SK-N-SH (cell line): ENCODE measurements at regions of chrX and their contacts with region 1.

Region 1: GRCh38 chrX:129833152-129833990 is 10.3 kb downstream of the ZDHHC9 start:
- DNase-seq: no peak
- H3K4me3 ChIP-seq: no peak overlapping the region
- H3K27ac ChIP-seq: peak overlapping the region in 1 of 2 experiments; percentile 36; a peak in 2 of 4 replicates
- H3K4me1 ChIP-seq: no peaks in the 10 kb centered on the region; a peak in 1 of 4 replicates
- H3K27me3 ChIP-seq: no peaks in the 10 kb centered on the region; the same call in 1 of the 2 replicates
- CTCF ChIP-seq: no peak
- EP300 ChIP-seq: no peak
- RAD21 ChIP-seq: no peak

Region 2: DNA sequence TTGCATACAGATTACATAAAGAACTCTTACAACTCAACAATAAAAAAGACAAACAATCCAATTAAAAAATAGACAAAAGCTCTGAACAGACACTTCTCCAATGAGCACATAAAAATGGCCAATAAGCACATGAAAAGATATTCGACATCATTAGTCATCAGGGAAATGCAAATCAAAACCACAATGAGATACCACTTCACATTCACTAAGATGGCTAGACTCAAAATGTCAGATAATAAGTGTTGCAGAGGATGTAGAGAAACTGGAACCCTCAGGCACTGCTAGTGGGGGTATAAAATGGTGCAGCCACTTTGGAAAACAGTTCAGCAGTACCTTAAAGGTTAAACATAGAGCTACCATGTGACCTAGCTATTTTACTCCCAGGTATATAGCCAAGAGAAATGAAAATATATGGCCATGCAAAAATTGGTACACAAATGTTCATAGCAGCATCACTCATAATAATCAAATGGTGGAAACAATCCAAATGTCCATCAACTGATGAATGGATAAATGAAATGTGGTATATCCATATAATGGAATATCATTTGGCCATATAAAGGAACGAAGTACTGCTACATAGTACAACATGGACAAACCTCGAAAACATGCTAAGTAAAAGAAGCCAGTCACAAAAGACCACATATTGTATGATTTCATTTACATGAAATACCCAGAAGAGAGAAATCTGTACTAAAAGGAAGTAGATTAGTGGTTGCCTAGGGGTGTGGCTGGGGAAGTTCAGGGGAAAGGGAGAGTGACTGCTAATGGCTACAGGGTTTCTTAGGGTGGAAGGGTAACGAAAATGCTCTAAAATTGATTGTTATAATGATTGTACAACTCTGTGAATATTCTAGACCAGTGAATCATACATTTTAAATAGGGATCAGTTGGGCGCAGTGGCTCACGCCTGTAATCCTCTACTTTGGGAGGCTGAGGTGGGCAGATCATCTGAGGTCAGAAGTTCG is 24.3 kb before region 1 on chrX:
- CTCF ChIA-PET with region 1: no interaction called
- POLR2A ChIA-PET with region 1: no interaction called
- DNase-seq: no peak
- H3K4me3 ChIP-seq: no peak overlapping the region
- H3K27ac ChIP-seq: no peak overlapping the region
- H3K4me1 ChIP-seq: no peaks in the 10 kb centered on the region
- H3K27me3 ChIP-seq: peaks cover 3% of the 10 kb centered on the region; the same call in 1 of the 2 replicates
- CTCF ChIP-seq: no peak
- EP300 ChIP-seq: no peak
- RAD21 ChIP-seq: no peak

Region 3: DNA sequence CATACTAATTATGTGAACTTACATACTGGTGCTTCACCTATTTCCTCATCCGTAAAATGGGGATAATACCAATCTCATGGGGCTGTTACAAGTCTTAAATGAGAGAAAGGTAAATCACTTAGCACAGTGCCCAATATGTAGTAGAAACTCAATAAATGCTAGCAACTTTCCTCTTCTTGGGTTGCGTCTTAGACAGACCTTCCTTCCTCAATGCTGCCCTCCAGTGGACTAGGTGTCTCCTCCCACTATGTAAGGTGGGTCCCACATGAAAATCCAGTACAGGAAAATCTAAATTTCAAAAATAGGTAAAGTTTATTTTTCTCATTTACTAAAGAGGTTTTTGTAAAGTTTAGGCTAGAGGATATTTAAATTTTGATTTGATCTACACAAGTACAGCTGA is 10.3 kb before region 1 on chrX:
- CTCF ChIA-PET with region 1: interaction called, 11 read pairs
- POLR2A ChIA-PET with region 1: no interaction called
- DNase-seq: peak; percentile 52
- H3K4me3 ChIP-seq: no peak overlapping the region
- H3K27ac ChIP-seq: no peak overlapping the region
- H3K4me1 ChIP-seq: no peaks in the 10 kb centered on the region
- H3K27me3 ChIP-seq: no peaks in the 10 kb centered on the region
- CTCF ChIP-seq: peak; percentile 67
- EP300 ChIP-seq: no peak
- RAD21 ChIP-seq: peak; percentile 65